GM13976 (cell line): ENCODE measurements at regions of chr16 and their contacts with region 1.

Region 1: GRCh38 chr16:58515125-58515870 is at the start of gene SETD6:
- DNase-seq: peak; percentile 90
- CTCF ChIP-seq: no peak

Region 2: GRCh38 chr16:58392215-58393137 is 122.8 kb before region 1 on chr16 and contains the start of gene GINS3:
- in situ Hi-C with region 1: no loop called
- DNase-seq: peak; percentile 94
- CTCF ChIP-seq: no peak

Region 3: DNA sequence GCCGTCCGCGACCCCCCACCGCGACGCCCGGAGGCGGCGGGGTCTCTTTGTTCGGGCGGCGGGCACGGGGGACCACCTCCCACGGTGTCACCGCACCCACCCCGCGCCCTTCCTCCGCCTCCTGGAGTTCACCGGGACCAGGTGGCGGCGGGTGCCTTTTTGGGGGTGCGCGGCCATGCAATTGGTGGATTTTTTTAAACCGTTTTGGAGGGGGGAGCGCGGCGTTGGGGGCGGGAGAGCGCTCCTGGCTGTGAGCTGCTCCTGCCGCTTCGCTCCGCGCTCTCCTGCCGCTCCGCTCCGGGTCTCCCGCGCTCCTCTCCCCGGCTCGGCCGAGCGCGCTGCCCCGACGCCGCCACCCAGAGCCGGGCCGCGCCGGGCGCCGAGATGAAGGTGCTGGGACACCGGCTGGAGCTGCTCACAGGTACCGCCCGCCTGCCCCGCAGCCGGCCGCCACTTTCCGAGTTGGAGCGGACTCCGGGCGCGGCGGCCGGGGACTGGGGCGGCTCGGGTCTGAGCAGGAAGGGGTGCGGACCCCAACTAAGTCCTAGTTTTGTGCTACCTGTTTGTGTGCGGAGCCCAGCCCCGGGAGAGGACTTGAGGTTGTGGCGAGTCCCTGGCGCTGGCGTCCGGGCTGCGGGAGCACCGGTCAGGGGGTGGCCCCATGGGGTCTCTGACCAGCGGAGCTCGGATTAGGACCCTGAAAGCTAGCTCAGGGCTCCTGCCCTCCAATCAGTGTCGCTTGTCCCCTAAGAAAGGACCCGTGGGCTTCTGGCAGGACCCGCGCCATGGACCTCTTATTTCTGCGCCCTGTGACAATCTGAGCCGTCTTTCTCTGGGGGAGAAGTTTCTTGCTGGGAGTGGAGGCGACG is 51.0 kb before region 1 on chr16:
- in situ Hi-C with region 1: no loop called
- DNase-seq: peak; percentile 55
- CTCF ChIP-seq: no peak

Region 4: GRCh38 chr16:58652461-58653140 is 137.3 kb after region 1 on chr16:
- in situ Hi-C with region 1: loop called (anchors 10 kb)
- DNase-seq: no peak
- CTCF ChIP-seq: no peak